ENCODE measurements at regions of chr2 and their contacts with region 1.

Region 1: GRCh38 chr2:226800941-226801784 is 1.5 kb upstream of the IRS1 start:
- DNase-seq: no peak

Region 2: GRCh38 chr2:225693259-225693658 is 1107.9 kb before region 1 on chr2:
- in situ Hi-C with region 1: loop called (anchors 25 kb)
- DNase-seq: no peak

Region 3: DNA sequence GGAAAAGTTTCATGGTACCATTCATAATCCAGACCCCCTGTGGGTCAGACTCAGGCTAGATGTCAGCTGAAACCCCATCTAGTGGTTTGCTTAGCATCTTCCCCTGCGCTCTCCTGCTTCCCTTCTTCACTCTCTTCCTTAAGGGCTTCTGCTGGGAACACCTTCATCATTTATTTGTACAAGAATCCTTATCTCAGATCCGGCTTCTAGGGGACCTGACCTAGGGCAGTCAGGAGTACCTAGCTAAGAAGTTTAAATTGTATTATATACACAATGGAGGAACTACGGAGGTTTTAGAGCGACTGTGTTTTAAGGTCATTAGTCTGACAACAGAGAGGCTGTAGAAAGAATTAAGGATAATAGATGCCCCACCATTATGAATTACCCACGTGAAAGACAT is 513.2 kb before region 1 on chr2:
- in situ Hi-C with region 1: no loop called
- DNase-seq: no peak